ENCODE measurements at regions of chr11 and their contacts with region 1.

Region 1: GRCh38 chr11:74929431-74930363 is 19.2 kb downstream of the XRRA1 start:
- DNase-seq: peak; percentile 90
- H3K4me3 Mint-ChIP-seq: no peak overlapping the region
- H3K27ac Mint-ChIP-seq: no peak overlapping the region
- H3K4me1 Mint-ChIP-seq: peaks cover 26% of the 10 kb centered on the region
- H3K27me3 Mint-ChIP-seq: no peaks in the 10 kb centered on the region

Region 2: GRCh38 chr11:74620531-74620930 is 309.2 kb before region 1 on chr11:
- intact Hi-C with region 1: no loop called
- DNase-seq: no peak
- H3K4me3 Mint-ChIP-seq: no peak overlapping the region
- H3K27ac Mint-ChIP-seq: no peak overlapping the region
- H3K4me1 Mint-ChIP-seq: peaks cover 3% of the 10 kb centered on the region
- H3K27me3 Mint-ChIP-seq: no peaks in the 10 kb centered on the region

Region 3: GRCh38 chr11:74849525-74850391 is 79.9 kb before region 1 on chr11:
- intact Hi-C with region 1: no loop called
- DNase-seq: no peak
- H3K4me3 Mint-ChIP-seq: no peak overlapping the region
- H3K27ac Mint-ChIP-seq: no peak overlapping the region
- H3K4me1 Mint-ChIP-seq: peaks cover 5% of the 10 kb centered on the region
- H3K27me3 Mint-ChIP-seq: no peaks in the 10 kb centered on the region

Region 4: GRCh38 chr11:74948898-74949747 is 19.4 kb after region 1 on chr11 and contains the starts of genes SPCS2 and XRRA1:
- intact Hi-C with region 1: loop called (anchors 2 kb)
- DNase-seq: peak; percentile 99
- H3K4me3 Mint-ChIP-seq: peak within 1 kb of the TSS; percentile 91
- H3K27ac Mint-ChIP-seq: peak within 1 kb of the TSS; percentile 89
- H3K4me1 Mint-ChIP-seq: peaks cover 37% of the 10 kb centered on the region
- H3K27me3 Mint-ChIP-seq: no peaks in the 10 kb centered on the region
- total RNA-seq, gene SPCS2: 154 and 169 TPM in 2 replicates
- total RNA-seq, gene XRRA1: 11.0 and 11.4 TPM in 2 replicates

Region 5: DNA sequence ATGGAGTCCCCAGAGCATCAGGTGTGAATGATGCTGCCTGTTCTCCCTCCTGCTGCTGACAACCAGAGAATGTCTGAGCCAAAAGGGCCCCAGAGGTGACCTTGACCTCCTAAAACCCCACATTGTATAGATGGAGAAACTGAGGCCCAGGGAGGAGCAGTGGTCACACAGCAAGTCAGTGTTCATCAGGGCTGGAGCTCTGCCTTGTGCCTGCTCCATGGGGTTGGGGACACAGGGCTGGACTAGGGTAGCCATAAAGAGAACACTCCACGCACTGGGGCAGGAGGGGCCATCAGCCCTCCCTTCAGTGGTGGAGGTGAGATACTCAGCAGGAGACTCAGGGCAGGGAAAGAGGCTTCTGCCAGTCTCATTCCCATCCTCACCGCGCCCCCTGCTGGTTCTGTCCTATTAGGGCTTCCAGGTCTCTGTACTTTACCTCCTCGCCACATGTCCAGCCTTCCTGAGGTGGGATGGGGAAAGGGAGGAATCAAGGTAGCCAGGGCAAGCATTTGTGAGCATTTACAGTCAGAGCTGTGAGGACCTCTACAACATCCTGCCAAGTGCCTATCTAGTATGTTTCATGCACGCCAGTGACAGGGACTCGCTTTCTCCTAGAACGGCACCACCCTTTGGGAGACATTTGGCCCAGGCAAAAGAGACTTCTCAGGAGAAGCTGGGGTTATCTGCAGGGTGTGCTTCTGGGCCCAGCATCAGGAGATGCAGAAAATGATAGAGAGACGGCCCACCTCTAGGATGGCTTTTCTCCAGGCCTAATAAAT is 102.3 kb after region 1 on chr11:
- intact Hi-C with region 1: loop called (anchors 1 kb)
- DNase-seq: peak; percentile 89
- H3K4me3 Mint-ChIP-seq: no peak overlapping the region
- H3K27ac Mint-ChIP-seq: no peak overlapping the region
- H3K4me1 Mint-ChIP-seq: peaks cover 3% of the 10 kb centered on the region
- H3K27me3 Mint-ChIP-seq: no peaks in the 10 kb centered on the region

Region 6: DNA sequence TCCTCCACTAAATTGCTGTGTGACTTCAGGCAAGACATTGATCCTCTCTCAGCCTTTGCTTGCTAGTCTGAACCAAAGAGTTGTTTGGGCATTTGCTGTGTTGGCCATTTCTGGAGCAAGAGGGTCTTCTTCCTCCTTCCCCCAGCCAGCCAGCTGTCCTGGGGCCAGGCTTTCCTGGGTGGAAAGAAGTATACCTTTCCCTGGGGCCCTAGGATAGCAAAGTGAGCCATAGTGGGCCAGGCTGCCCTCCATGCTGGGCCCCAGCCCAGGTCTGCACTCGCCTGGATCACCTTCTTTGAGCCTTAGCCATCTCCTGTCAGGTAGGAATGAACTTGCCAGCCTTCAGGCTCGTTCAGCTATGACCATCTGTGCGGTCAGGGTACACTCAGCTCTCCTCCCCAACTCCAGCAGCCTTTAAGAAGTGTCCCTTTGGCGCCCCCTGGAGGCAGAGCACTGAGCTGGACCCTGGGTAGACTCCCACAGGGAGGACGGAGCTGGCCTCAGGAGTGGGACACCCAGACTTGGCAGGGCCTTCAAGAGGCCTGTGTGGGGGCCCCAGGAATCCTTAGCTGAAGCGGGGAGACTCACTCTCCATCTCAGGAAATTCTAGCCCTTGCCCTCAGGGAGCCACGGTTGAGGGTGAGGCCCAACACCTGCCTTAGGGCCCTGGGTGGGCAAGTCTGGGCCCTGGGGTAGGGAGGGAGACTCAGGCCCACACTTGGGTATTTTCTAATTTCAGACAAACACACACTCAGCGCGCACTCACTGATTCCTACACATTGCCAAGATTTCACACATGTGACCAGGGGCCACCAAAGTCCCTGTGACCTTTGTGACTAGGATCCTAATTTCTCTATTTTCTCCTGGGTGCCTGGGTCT is 275.2 kb after region 1 on chr11:
- intact Hi-C with region 1: loop called (anchors 2 kb)
- DNase-seq: peak; percentile 95
- H3K4me3 Mint-ChIP-seq: no peak overlapping the region
- H3K27ac Mint-ChIP-seq: no peak overlapping the region
- H3K4me1 Mint-ChIP-seq: no peaks in the 10 kb centered on the region
- H3K27me3 Mint-ChIP-seq: peaks cover 12% of the 10 kb centered on the region

Region 7: DNA sequence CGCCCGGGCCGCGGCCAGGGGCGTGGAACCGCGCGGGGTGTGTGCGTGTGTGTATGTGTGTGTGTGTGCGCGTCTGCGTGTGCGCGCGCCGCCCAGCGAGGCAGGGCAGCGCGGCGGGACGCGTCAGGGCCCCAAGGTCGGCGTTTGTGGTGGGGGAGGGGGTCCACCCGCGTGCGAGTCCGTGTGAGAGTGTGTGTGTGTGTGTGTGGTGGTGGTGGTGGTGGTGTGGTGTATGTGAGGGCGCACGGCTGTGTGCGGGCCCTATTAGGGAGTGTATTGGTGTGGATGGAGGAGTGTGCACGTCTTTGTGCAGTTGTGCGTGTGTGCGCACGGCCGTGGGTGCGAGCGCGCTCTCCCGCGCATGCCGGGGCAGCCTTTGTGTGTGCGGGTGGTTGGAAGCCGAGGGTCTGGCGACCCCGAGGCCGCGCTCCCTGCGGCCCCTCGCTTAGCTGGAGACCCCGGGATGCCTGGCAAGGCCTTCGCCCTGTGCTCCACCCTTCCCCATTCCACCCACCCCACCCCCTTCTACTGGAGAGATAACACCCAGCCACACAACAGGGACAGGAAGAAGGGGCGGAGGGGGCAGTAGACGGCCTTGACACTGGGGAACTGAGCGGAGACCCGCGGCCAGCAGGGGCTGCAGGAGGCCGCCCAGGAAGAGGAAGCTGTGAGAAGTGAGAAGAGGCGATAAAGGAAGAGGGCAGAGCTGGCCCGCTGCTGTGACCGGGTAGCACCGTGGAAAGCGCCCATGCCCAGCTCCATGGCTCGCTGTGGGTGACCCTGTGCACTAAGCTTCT is 422.3 kb after region 1 on chr11:
- intact Hi-C with region 1: loop called (anchors 10 kb)
- DNase-seq: peak; percentile 91
- H3K4me3 Mint-ChIP-seq: peak overlapping the region; percentile 90
- H3K27ac Mint-ChIP-seq: peak overlapping the region; percentile 89
- H3K4me1 Mint-ChIP-seq: peaks cover 53% of the 10 kb centered on the region
- H3K27me3 Mint-ChIP-seq: no peaks in the 10 kb centered on the region